ENCODE measurements at regions of chr4 and their contacts with region 1.

Region 1: GRCh38 chr4:146342600-146343192 is 128.4 kb downstream of the REELD1 start:
- DNase-seq: peak; percentile 7 to 31 (median 13)
- ATAC-seq: no peak
- H3K4me3 ChIP-seq: no peak overlapping the region
- H3K27ac ChIP-seq: no peak overlapping the region
- H3K4me1 ChIP-seq: no peaks in the 10 kb centered on the region
- H3K27me3 ChIP-seq: no peaks in the 10 kb centered on the region
- CTCF ChIP-seq: peak; percentile 20 to 69 (median 49)
- POLR2A ChIP-seq: no peak

Region 2: GRCh38 chr4:146742416-146742815 is 399.7 kb after region 1 on chr4:
- intact Hi-C with region 1: no loop called
- DNase-seq: no peak
- ATAC-seq: no peak
- H3K4me3 ChIP-seq: no peak overlapping the region
- H3K27ac ChIP-seq: no peak overlapping the region
- H3K4me1 ChIP-seq: no peaks in the 10 kb centered on the region
- H3K27me3 ChIP-seq: no peaks in the 10 kb centered on the region
- CTCF ChIP-seq: no peak
- POLR2A ChIP-seq: no peak

Region 3: DNA sequence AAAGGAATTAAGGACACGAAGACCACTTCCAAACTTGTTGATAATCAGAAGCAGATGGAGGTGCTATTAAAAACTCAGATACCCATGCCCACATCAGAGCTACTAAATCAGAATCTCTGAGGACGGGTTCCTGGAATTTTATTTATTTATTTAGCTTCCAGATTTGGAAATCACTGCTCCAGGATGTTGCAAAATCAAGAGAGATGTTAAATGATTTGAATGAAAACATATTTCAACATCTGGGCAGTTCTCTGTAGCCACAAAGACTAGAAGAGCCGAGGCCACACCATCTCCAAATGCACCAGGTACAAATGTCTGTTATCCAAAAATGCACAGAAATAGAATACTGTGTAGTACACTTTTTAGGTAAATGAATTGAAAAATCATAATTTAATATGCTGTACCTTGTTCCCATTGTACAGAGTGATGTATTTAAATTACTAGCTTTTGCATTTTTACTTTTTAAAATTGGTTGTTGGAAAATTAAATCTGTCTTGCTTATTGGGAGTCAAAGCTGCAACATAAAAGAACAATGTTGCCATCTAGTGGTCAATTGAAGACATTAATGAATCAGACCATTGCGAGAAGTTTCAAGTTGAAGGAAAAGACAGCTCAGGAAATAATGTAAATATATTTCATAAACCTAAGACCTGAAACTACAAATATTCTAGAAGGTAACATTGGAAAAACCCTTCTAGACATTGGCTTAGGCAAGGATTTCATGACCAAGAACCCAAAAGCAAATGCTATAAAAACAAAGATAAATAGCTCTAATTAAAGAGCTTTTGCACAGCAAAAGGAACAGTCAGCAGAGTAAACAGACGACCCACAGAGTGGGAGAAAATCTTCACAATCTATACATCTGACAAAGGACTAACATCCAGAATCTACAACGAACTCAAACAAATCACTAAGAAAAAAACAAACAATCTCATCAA is 754.2 kb after region 1 on chr4:
- intact Hi-C with region 1: loop called (anchors 10 kb)
- DNase-seq: no peak
- ATAC-seq: peak; percentile 30
- H3K4me3 ChIP-seq: no peak overlapping the region
- H3K27ac ChIP-seq: no peak overlapping the region
- H3K4me1 ChIP-seq: no peaks in the 10 kb centered on the region
- H3K27me3 ChIP-seq: peaks cover 0 to 3% of the 10 kb centered on the region in 2 donors
- CTCF ChIP-seq: peak in 6 of 7 experiments; percentile 51 to 75 (median 68)
- POLR2A ChIP-seq: no peak

Measured in body of pancreas (tissue), 4 donors.